ENCODE measurements at regions of chr12 and their contacts with region 1.

Region 1: DNA sequence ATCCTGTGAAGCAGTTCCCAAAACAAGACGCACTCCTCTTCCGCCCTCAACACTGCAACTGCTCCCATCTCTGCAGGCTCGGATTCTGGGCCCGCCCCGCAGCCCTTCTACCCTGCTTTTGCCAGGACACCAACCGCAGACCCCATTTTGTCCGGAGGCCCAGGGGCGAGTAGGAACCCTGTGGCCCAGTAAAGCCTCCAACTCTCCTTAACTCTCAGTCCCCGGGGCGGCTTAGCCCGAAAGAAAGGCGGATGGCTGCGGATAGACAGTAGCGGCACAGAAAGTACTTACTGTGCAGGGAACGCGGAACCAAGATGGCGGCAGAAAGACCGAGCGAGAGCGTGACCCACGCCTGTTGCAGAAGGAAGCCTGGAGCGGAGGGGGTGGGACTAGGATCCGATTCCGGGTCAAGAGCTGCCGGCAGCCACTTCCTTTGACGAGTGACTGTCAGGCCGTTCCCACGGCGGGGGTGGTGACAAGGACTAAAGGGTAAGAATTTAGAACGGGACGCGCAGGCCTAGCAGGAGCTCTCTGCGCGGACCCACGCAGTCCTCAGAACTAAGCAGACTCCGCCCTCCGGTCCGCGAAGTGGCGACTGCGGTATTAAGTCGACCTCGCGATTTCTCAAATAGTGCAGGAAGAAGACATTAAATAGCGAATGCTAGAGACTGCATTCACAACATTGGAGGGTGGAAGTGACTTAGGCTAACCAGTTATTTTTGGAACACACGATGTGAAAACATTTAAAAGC is at the start of gene NACA:
- DNase-seq: peak; percentile 99
- H3K4me3 ChIP-seq: peak within 1 kb of the TSS; percentile 70 to 78 (median 76)
- H3K27ac ChIP-seq: peak within 1 kb of the TSS; percentile 91 to 96 (median 93)
- H3K4me1 ChIP-seq: peaks cover 29 to 51% (median 38%) of the 10 kb centered on the region in 3 donors
- H3K27me3 ChIP-seq: no peaks in the 10 kb centered on the region
- CTCF ChIP-seq: no peak
- POLR2A ChIP-seq: peak in 3 of 4 donors; percentile 87 to 97 (median 93)
- total RNA-seq, gene NACA: 1,083 to 1,907 (median 1,546) TPM

Region 2: DNA sequence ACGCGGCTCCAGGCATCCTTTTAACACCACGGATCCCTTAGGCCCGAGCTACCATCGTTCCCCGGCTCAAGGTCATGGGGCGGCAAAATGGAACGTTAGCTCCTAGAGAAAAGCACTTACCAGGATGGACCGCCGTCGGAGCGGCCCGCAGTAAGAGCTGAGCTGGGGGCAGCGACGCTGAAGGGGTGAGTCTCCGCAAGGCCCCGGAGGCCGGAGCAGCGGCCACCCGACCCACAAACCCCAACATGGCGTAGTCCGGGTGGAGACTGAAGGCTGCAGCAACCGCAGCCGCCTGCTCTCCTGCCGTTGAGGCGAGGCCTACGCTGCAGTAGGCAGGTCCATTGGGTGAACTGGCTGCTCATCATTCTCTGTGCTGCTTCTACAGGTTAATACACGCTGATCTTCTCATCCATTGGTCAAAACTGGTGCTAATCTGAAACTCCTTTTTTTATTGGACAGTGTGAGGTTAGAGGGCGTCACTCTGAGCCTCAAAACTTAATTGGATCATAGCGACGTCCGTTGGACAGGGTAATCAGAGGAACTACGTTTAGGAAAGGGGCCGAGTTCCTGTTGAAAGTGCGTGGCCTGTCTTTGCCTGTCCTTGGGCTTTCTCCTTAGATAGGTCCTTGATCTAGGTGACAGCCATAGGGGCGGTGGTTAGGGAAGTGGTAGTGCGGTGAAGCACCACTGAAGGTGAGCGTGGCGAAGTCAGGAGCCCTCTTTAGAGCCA is 79.3 kb before region 1 on chr12 and contains the start of gene ATP5F1B:
- intact Hi-C with region 1: loop called (anchors 10 kb)
- DNase-seq: peak; percentile 90
- H3K4me3 ChIP-seq: peak within 1 kb of the TSS; percentile 79 to 91 (median 86)
- H3K27ac ChIP-seq: peak within 1 kb of the TSS; percentile 91 to 97 (median 94)
- H3K4me1 ChIP-seq: peaks cover 8 to 49% (median 36%) of the 10 kb centered on the region in 3 donors
- H3K27me3 ChIP-seq: no peaks in the 10 kb centered on the region
- CTCF ChIP-seq: peak in 2 of 6 experiments; percentile 12 to 18
- POLR2A ChIP-seq: peak in 3 of 4 donors; percentile 94 to 99 (median 97)
- total RNA-seq, gene ATP5F1B: 337 to 726 (median 526) TPM

Region 3: GRCh38 chr12:56688129-56688845 is 36.9 kb before region 1 on chr12 and contains the start of gene PTGES3:
- intact Hi-C with region 1: loop called (anchors 5 kb)
- DNase-seq: peak; percentile 83
- H3K4me3 ChIP-seq: peak within 1 kb of the TSS; percentile 81 to 99 (median 94)
- H3K27ac ChIP-seq: peak within 1 kb of the TSS; percentile 98 to 100 (median 100)
- H3K4me1 ChIP-seq: peaks cover 7 to 48% (median 13%) of the 10 kb centered on the region in 3 donors
- H3K27me3 ChIP-seq: no peaks in the 10 kb centered on the region
- CTCF ChIP-seq: peak in 1 of 6 experiments; percentile 9
- POLR2A ChIP-seq: peak in 3 of 4 donors; percentile 73 to 97 (median 90)
- total RNA-seq, gene PTGES3: 61.9 to 157 (median 100) TPM

Region 4: GRCh38 chr12:56947633-56948456 is 222.7 kb after region 1 on chr12:
- intact Hi-C with region 1: no loop called
- DNase-seq: no peak
- H3K4me3 ChIP-seq: no peak overlapping the region
- H3K27ac ChIP-seq: no peak overlapping the region
- H3K4me1 ChIP-seq: no peaks in the 10 kb centered on the region
- H3K27me3 ChIP-seq: no peaks in the 10 kb centered on the region
- CTCF ChIP-seq: peak in 1 of 6 experiments; percentile 13
- POLR2A ChIP-seq: no peak